Activated CD4-positive, alpha-beta T cell treated with anti-CD3 and anti-CD28 coated beads, Interleukin-2, amount 10 ng/mL, durations not matched to agents 24 days and 14 days (primary cell): ENCODE measurements at regions of chr6 and their contacts with region 1.

Region 1: DNA sequence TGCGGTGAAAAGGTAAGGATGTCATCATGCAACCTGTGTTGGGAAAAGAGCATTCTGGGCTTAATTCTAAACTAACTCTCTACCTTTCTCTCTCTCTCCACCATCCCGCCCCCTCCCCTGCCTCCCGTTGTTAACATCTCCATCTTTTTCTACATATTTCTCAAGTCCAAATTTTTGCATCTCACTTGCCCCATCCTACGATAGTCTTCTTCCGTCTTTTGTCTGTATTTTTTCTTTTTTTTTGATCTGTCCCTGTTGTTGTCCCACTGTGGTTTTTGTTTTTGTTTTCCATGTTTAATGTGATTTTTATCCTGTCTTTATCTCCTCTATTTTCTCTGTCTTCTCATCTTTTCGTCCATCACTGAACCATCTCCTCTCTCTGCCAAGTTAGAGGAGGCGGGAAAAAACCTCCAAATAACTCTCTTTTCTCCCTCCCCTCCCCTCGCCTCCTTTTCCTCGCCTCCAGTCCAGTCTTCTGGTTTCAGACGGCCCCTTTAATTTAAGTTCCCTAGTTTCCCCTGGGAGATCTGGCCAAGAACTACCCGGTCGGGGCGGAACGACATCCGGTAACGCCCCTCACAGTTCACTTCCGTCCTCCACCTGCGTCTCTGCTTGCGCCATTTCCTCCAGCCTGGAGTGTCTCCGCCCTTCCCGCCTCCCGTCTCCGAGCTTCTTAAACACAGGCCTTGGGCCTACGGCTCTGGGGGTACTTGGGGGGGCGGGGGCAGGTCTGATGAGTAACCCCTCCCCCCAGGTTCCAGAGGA is at the start of gene NFKBIL1:
- DNase-seq: peak; percentile 97
- H3K4me3 Mint-ChIP-seq: peak within 1 kb of the TSS; percentile 91
- H3K27ac Mint-ChIP-seq: peak within 1 kb of the TSS; percentile 91
- H3K4me1 Mint-ChIP-seq: peaks cover 51% of the 10 kb centered on the region
- H3K27me3 Mint-ChIP-seq: no peaks in the 10 kb centered on the region
- total RNA-seq, gene NFKBIL1: 14.8 and 16.2 TPM in 2 replicates

Region 2: GRCh38 chr6:31216208-31216898 is 330.8 kb before region 1 on chr6:
- intact Hi-C with region 1: no loop called
- DNase-seq: no peak
- H3K4me3 Mint-ChIP-seq: no peak overlapping the region
- H3K27ac Mint-ChIP-seq: peak overlapping the region; percentile 19
- H3K4me1 Mint-ChIP-seq: peaks cover 5% of the 10 kb centered on the region
- H3K27me3 Mint-ChIP-seq: peaks cover 4% of the 10 kb centered on the region

Region 3: GRCh38 chr6:31532644-31533454 is 14.3 kb before region 1 on chr6:
- intact Hi-C with region 1: no loop called
- DNase-seq: no peak
- H3K4me3 Mint-ChIP-seq: no peak overlapping the region
- H3K27ac Mint-ChIP-seq: peak overlapping the region; percentile 62
- H3K4me1 Mint-ChIP-seq: peaks cover 25% of the 10 kb centered on the region
- H3K27me3 Mint-ChIP-seq: no peaks in the 10 kb centered on the region

Region 4: DNA sequence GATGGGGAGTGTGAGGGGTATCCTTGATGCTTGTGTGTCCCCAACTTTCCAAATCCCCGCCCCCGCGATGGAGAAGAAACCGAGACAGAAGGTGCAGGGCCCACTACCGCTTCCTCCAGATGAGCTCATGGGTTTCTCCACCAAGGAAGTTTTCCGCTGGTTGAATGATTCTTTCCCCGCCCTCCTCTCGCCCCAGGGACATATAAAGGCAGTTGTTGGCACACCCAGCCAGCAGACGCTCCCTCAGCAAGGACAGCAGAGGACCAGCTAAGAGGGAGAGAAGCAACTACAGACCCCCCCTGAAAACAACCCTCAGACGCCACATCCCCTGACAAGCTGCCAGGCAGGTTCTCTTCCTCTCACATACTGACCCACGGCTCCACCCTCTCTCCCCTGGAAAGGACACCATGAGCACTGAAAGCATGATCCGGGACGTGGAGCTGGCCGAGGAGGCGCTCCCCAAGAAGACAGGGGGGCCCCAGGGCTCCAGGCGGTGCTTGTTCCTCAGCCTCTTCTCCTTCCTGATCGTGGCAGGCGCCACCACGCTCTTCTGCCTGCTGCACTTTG is 28.3 kb after region 1 on chr6 and contains the start of gene TNF:
- intact Hi-C with region 1: loop called (anchors 1 kb)
- DNase-seq: peak; percentile 96
- H3K4me3 Mint-ChIP-seq: peak within 1 kb of the TSS; percentile 99
- H3K27ac Mint-ChIP-seq: peak within 1 kb of the TSS; percentile 99
- H3K4me1 Mint-ChIP-seq: peaks cover 78% of the 10 kb centered on the region
- H3K27me3 Mint-ChIP-seq: no peaks in the 10 kb centered on the region
- total RNA-seq, gene TNF: 294 and 303 TPM in 2 replicates

Region 5: DNA sequence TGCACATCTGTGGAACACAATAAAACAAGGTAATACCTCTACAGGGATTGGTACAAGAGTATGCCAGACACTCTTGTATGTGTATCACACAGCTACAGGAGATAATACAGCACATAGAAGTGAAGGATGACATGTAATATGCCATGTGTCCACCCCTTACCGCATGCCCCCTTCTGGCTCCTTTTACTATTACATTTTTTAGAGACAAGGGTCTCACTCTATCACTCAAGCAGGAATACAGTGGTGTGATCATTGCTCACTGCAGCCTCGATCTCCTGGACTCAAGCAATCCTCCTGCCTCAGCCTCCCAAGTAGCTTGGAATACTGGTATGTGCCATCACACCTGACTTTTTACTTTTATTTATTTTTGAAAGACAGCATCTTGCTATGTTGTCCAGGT is 49.9 kb after region 1 on chr6:
- intact Hi-C with region 1: loop called (anchors 1 kb)
- DNase-seq: peak; percentile 84
- H3K4me3 Mint-ChIP-seq: no peak overlapping the region
- H3K27ac Mint-ChIP-seq: no peak overlapping the region
- H3K4me1 Mint-ChIP-seq: peaks cover 41% of the 10 kb centered on the region
- H3K27me3 Mint-ChIP-seq: no peaks in the 10 kb centered on the region

Region 6: DNA sequence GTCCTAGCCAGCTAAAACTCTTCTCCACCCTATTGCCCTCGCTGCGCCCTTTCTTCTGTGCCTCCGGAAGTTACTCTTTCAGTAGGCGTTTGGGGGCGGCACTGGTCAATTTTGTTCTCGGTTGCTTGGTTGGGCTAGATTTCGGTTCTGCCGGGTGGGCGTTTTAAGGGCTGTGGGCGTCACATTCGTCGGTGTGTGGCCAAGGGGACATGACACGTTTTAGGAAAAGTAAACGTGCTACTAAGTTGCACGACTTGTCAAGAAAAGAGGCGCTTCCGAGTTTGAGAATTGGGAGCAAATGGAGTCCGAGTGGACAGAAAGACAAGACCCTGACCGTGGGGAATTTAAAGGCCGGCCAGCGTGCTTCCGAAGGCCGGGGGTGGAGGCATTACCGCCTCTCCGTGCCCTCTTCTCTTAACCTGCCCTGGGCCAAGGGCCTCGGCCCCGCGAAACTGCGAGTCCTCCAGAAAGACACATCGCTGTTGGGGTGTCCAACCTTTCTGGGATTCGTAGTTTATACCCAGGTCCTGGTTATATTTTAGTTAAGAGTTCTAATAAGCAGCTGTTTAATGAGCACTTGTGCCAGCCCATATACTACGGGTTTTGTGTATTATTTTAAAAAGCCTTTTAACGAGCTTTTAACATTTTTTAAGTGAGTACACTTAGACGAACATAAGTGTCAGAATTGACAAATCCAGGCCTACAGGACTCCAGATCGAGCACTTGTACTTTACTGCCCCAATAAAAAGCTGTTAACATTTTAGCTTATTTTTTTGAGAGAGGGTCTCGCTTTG is 106.0 kb after region 1 on chr6:
- intact Hi-C with region 1: loop called (anchors 1 kb)
- DNase-seq: no peak
- H3K4me3 Mint-ChIP-seq: peak overlapping the region; percentile 94
- H3K27ac Mint-ChIP-seq: peak overlapping the region; percentile 100
- H3K4me1 Mint-ChIP-seq: peaks cover 58% of the 10 kb centered on the region
- H3K27me3 Mint-ChIP-seq: peaks cover 3% of the 10 kb centered on the region

Region 7: DNA sequence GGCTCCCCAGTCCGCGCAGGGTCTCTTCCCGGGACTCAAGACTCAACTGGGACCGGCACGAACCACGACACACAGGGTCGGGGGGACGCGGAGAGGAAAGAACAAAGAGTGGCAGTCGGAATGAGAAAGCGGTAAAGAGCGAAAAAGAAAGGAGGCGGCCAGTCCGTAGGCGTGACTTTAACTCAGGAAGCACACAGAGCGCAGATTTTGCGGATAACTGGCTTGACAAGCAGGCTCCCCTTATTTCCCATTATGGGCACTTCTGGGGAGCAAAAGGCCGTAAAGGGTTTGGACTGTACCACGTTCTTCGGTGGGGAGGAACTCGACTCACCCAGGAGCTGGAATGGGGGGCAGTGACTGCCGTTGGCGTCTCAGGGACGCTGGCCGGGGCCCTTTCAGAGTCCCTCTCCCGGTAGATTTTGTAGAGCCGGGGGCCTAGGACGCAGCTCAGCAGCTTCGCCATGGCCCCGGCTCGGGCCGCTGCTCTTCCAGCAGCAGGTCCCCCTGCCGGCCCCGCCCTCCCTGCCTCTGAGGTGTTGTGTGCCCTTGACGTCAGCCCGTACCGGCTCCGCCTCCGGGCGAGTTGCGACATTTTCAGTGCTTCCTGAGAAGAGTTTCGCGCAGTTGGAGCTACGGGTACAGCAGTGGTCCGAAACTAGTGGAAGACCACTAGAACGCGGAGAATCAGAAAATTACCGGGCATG is 155.8 kb after region 1 on chr6 and contains the start of gene ABHD16A:
- intact Hi-C with region 1: no loop called
- DNase-seq: peak; percentile 99
- H3K4me3 Mint-ChIP-seq: peak within 1 kb of the TSS; percentile 98
- H3K27ac Mint-ChIP-seq: peak within 1 kb of the TSS; percentile 99
- H3K4me1 Mint-ChIP-seq: peaks cover 24% of the 10 kb centered on the region
- H3K27me3 Mint-ChIP-seq: no peaks in the 10 kb centered on the region
- total RNA-seq, gene ABHD16A: 43.1 and 44.7 TPM in 2 replicates

Region 8: GRCh38 chr6:31763619-31763940 is 216.4 kb after region 1 on chr6:
- intact Hi-C with region 1: no loop called
- DNase-seq: no peak
- H3K4me3 Mint-ChIP-seq: no peak overlapping the region
- H3K27ac Mint-ChIP-seq: peak overlapping the region; percentile 34
- H3K4me1 Mint-ChIP-seq: peaks cover 5% of the 10 kb centered on the region
- H3K27me3 Mint-ChIP-seq: no peaks in the 10 kb centered on the region